ENCODE measurements at regions of chr12 and their contacts with region 1.

Region 1: DNA sequence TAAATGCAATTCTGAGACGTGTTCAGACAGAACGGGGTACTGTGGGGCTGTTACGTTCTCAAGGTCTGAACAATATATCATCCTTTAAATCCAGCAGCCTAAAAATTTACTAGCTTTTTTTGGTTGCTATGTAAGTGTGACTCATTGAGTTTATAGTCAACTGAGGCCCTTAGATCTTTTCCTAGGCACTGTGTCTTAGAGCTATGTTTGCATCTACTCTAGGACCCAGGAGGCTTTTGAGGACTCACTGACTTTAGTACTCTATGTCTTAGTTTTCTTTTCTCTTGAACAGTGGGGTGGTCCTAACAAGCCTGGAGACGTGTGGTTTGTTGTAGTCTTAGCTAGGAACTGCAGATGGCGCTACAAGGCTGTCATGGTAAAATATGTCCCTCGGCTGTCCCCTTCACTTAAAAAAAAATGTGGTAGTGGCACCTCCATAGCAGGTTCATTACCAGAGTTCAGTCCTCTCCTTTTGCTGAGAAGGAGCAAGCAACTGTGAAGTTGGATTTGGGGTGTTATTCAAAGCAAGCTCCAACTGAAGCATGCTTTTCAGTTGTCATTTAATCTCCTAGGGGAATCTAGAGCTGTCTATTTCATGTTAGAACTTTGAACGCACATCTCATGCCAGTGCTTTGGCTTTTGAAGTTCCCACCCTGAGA is 8.7 kb upstream of the SPATS2 start:
- DNase-seq: peak; percentile 69 to 86 (median 72)
- ATAC-seq: peak; percentile 96
- H3K4me3 ChIP-seq: no peak overlapping the region
- H3K27ac ChIP-seq: no peak overlapping the region
- H3K4me1 ChIP-seq: no peaks in the 10 kb centered on the region
- H3K27me3 ChIP-seq: no peaks in the 10 kb centered on the region
- CTCF ChIP-seq: peak; percentile 80 to 94 (median 90)
- EP300 ChIP-seq: no peak
- POLR2A ChIP-seq: no peak
- RAD21 ChIP-seq: peak; percentile 98

Region 2: GRCh38 chr12:49288412-49288853 is 70.2 kb before region 1 on chr12:
- CTCF ChIA-PET with region 1: interaction called, 11 read pairs
- POLR2A ChIA-PET with region 1: no interaction called
- in situ Hi-C with region 1: no loop called
- intact Hi-C with region 1: loop called (anchors 1 kb)
- DNase-seq: peak; percentile 68 to 77 (median 76)
- ATAC-seq: peak; percentile 65
- H3K4me3 ChIP-seq: no peak overlapping the region
- H3K27ac ChIP-seq: no peak overlapping the region
- H3K4me1 ChIP-seq: peaks cover 5 to 14% of the 10 kb centered on the region in 2 experiments
- H3K27me3 ChIP-seq: no peaks in the 10 kb centered on the region
- CTCF ChIP-seq: peak; percentile 85 to 92 (median 91)
- EP300 ChIP-seq: no peak
- POLR2A ChIP-seq: no peak
- RAD21 ChIP-seq: peak; percentile 90 to 92

Region 3: GRCh38 chr12:49331380-49332222 is 27.0 kb before region 1 on chr12:
- CTCF ChIA-PET with region 1: interaction called, 11 read pairs
- POLR2A ChIA-PET with region 1: interaction called, 4 read pairs
- in situ Hi-C with region 1: no loop called
- intact Hi-C with region 1: no loop called
- DNase-seq: peak; percentile 65 to 75 (median 71)
- ATAC-seq: peak; percentile 94
- H3K4me3 ChIP-seq: no peak overlapping the region
- H3K27ac ChIP-seq: no peak overlapping the region
- H3K4me1 ChIP-seq: peaks cover 0 to 22% of the 10 kb centered on the region in 2 experiments; a peak in 2 of 5 replicates
- H3K27me3 ChIP-seq: no peaks in the 10 kb centered on the region
- CTCF ChIP-seq: peak; percentile 90 to 95 (median 94)
- EP300 ChIP-seq: no peak
- POLR2A ChIP-seq: no peak; the same call in 1 of the 2 replicates
- RAD21 ChIP-seq: peak; percentile 75 to 80

Region 4: GRCh38 chr12:49470986-49471385 is 112.4 kb after region 1 on chr12:
- CTCF ChIA-PET with region 1: no interaction called
- POLR2A ChIA-PET with region 1: no interaction called
- in situ Hi-C with region 1: no loop called
- intact Hi-C with region 1: no loop called
- DNase-seq: no peak
- ATAC-seq: no peak
- H3K4me3 ChIP-seq: no peak overlapping the region
- H3K27ac ChIP-seq: no peak overlapping the region
- H3K4me1 ChIP-seq: no peaks in the 10 kb centered on the region; a peak in 1 of 5 replicates
- H3K27me3 ChIP-seq: no peaks in the 10 kb centered on the region
- CTCF ChIP-seq: no peak
- EP300 ChIP-seq: no peak
- POLR2A ChIP-seq: no peak
- RAD21 ChIP-seq: no peak

Region 5: DNA sequence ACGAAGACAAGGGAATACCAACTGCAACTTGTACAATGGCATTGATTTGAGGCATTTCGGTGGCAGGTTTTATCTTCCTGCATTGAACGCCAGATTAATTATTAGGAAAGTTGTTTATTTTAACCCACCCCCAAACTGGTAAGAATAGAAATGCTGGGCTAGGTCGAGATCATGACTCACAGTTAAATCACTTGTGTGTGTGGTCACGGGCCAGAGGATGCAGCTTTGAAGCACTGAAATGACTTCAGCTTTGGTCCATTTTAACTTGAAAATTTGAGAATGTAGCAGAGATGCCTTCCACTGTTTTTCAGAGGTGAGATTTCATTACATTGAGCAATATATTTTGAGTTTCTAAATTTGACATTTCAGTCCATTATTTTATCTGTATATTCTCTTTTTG is 156.7 kb after region 1 on chr12:
- CTCF ChIA-PET with region 1: interaction called, 185 read pairs
- POLR2A ChIA-PET with region 1: interaction called, 14 read pairs
- in situ Hi-C with region 1: loop called (anchors 5 kb)
- intact Hi-C with region 1: loop called (anchors 1 kb)
- DNase-seq: no peak
- ATAC-seq: no peak
- H3K4me3 ChIP-seq: no peak overlapping the region
- H3K27ac ChIP-seq: no peak overlapping the region
- H3K4me1 ChIP-seq: no peaks in the 10 kb centered on the region
- H3K27me3 ChIP-seq: no peaks in the 10 kb centered on the region
- CTCF ChIP-seq: no peak
- EP300 ChIP-seq: no peak
- POLR2A ChIP-seq: no peak
- RAD21 ChIP-seq: no peak

Region 6: GRCh38 chr12:49553512-49554088 is 195.0 kb after region 1 on chr12:
- CTCF ChIA-PET with region 1: interaction called, 19 read pairs
- POLR2A ChIA-PET with region 1: no interaction called
- in situ Hi-C with region 1: no loop called
- intact Hi-C with region 1: no loop called
- DNase-seq: peak; percentile 50 to 68 (median 56)
- ATAC-seq: peak; percentile 77
- H3K4me3 ChIP-seq: no peak overlapping the region
- H3K27ac ChIP-seq: no peak overlapping the region
- H3K4me1 ChIP-seq: peaks cover 0 to 29% of the 10 kb centered on the region in 2 experiments; a peak in 3 of 5 replicates
- H3K27me3 ChIP-seq: peaks cover 6 to 44% of the 10 kb centered on the region in 2 experiments; a peak in 4 of 5 replicates
- CTCF ChIP-seq: peak; percentile 73 to 99 (median 98)
- EP300 ChIP-seq: no peak; the same call in 1 of the 2 replicates
- POLR2A ChIP-seq: no peak
- RAD21 ChIP-seq: peak; percentile 50 to 83

Region 7: DNA sequence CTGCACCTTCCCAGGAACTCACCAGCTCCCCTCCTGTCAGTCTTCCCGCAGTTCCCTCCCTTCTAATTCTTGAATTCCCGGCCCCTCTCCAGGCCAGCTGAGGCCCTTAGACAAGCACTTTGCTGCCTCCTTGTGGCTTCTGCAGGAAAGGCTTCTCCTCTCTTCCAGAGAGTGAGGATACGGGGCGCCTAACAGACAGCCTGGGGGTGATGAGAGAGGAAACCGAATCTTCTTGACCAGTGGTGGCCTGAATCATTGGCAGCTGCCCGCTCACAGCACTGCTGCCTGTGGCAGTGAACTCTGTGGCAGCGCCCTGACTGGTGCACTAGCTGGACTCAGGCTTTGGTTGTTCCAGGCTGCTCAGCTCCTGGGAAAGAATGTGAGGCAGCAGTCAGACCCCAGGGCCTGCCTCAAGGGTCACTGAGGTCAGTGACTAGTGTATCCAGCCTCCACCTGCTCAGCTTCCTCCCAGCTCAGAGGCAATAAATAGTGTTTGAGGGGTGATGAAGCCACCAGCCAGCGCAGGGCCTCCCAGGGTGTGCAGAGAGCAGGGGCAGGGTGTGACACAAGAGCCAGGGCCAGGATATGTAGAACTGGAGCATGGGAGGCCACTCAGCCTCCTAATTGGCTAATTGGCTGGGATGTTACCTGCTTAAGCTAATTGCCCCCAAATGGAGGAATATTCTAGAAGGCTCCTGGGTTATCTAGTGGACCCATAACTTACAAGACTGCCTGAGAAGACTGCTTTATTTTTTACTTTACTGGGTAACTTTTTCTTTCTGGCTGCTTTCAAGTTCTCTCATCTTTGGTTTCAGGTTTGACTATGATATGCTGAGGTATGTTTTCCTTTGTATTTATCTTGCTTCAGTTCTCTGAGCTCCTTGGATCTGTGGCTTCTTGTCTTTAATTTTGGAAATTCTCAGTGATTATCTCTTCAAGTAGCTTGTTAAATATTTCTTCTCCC is 222.2 kb after region 1 on chr12:
- CTCF ChIA-PET with region 1: interaction called, 46 read pairs
- POLR2A ChIA-PET with region 1: no interaction called
- in situ Hi-C with region 1: no loop called
- intact Hi-C with region 1: loop called (anchors 1 kb)
- DNase-seq: peak; percentile 71 to 82 (median 74)
- ATAC-seq: peak; percentile 98
- H3K4me3 ChIP-seq: no peak overlapping the region
- H3K27ac ChIP-seq: no peak overlapping the region
- H3K4me1 ChIP-seq: peaks cover 5 to 20% of the 10 kb centered on the region in 2 experiments; a peak in 4 of 5 replicates
- H3K27me3 ChIP-seq: no peaks in the 10 kb centered on the region
- CTCF ChIP-seq: peak; percentile 84 to 93 (median 92)
- EP300 ChIP-seq: no peak
- POLR2A ChIP-seq: no peak
- RAD21 ChIP-seq: peak; percentile 63 to 86

Region 8: GRCh38 chr12:49623142-49623904 is 264.7 kb after region 1 on chr12 and contains the start of gene PRPF40B:
- CTCF ChIA-PET with region 1: no interaction called
- POLR2A ChIA-PET with region 1: no interaction called
- in situ Hi-C with region 1: no loop called
- intact Hi-C with region 1: loop called (anchors 1 kb)
- DNase-seq: peak; percentile 91 to 99 (median 99)
- ATAC-seq: peak; percentile 93
- H3K4me3 ChIP-seq: peak within 1 kb of the TSS; percentile 46
- H3K27ac ChIP-seq: peak within 1 kb of the TSS; percentile 66
- H3K4me1 ChIP-seq: peaks cover 15 to 22% of the 10 kb centered on the region in 2 experiments
- H3K27me3 ChIP-seq: no peaks in the 10 kb centered on the region
- CTCF ChIP-seq: peak; percentile 51 to 88 (median 76); a peak in 5 of 6 replicates
- EP300 ChIP-seq: no peak
- POLR2A ChIP-seq: peak; percentile 89
- RAD21 ChIP-seq: peak in 1 of 2 experiments; percentile 58; a peak in 2 of 4 replicates
- polyA plus RNA-seq, gene PRPF40B: 0.55 to 0.85 TPM

Region 9: GRCh38 chr12:50326636-50327284 is 968.1 kb after region 1 on chr12:
- CTCF ChIA-PET with region 1: no interaction called
- POLR2A ChIA-PET with region 1: no interaction called
- in situ Hi-C with region 1: no loop called
- intact Hi-C with region 1: no loop called
- DNase-seq: no peak
- ATAC-seq: no peak
- H3K4me3 ChIP-seq: no peak overlapping the region
- H3K27ac ChIP-seq: no peak overlapping the region
- H3K4me1 ChIP-seq: peaks cover 0 to 3% of the 10 kb centered on the region in 2 experiments; a peak in 2 of 5 replicates
- H3K27me3 ChIP-seq: no peaks in the 10 kb centered on the region
- CTCF ChIP-seq: no peak
- EP300 ChIP-seq: no peak
- POLR2A ChIP-seq: no peak
- RAD21 ChIP-seq: no peak